HepG2 (cell line): ENCODE measurements at regions of chr1 and their contacts with region 1.

Region 1: GRCh38 chr1:26161415-26162219 is 2.7 kb downstream of the FAM110D start:
- DNase-seq: no peak
- ATAC-seq: peak; percentile 66
- H3K4me3 ChIP-seq: peak overlapping the region; percentile 42 to 76 (median 47); a peak in 5 of 6 replicates
- H3K27ac ChIP-seq: no peak overlapping the region
- H3K4me1 ChIP-seq: peaks cover 43% of the 10 kb centered on the region
- H3K27me3 ChIP-seq: peaks cover 12 to 68% of the 10 kb centered on the region in 2 experiments; a peak in 4 of 5 replicates
- CTCF ChIP-seq: peak; percentile 43; the same call in 1 of the 2 replicates
- EP300 ChIP-seq: no peak
- POLR2A ChIP-seq: no peak
- RAD21 ChIP-seq: 0 out of 2 replicates have a peak, but pooled peaks have one; percentile 34

Region 2: GRCh38 chr1:26102526-26102925 is 59.1 kb before region 1 on chr1:
- CTCF ChIA-PET with region 1: interaction called, 11 read pairs
- POLR2A ChIA-PET with region 1: no interaction called
- in situ Hi-C with region 1: loop called (anchors 10 kb)
- intact Hi-C with region 1: no loop called
- DNase-seq: no peak
- ATAC-seq: no peak
- H3K4me3 ChIP-seq: no peak overlapping the region
- H3K27ac ChIP-seq: no peak overlapping the region
- H3K4me1 ChIP-seq: peaks cover 8% of the 10 kb centered on the region; the same call in 1 of the 2 replicates
- H3K27me3 ChIP-seq: peaks cover 0 to 18% of the 10 kb centered on the region in 2 experiments; a peak in 1 of 5 replicates
- CTCF ChIP-seq: no peak
- EP300 ChIP-seq: no peak
- POLR2A ChIP-seq: no peak
- RAD21 ChIP-seq: no peak

Region 3: DNA sequence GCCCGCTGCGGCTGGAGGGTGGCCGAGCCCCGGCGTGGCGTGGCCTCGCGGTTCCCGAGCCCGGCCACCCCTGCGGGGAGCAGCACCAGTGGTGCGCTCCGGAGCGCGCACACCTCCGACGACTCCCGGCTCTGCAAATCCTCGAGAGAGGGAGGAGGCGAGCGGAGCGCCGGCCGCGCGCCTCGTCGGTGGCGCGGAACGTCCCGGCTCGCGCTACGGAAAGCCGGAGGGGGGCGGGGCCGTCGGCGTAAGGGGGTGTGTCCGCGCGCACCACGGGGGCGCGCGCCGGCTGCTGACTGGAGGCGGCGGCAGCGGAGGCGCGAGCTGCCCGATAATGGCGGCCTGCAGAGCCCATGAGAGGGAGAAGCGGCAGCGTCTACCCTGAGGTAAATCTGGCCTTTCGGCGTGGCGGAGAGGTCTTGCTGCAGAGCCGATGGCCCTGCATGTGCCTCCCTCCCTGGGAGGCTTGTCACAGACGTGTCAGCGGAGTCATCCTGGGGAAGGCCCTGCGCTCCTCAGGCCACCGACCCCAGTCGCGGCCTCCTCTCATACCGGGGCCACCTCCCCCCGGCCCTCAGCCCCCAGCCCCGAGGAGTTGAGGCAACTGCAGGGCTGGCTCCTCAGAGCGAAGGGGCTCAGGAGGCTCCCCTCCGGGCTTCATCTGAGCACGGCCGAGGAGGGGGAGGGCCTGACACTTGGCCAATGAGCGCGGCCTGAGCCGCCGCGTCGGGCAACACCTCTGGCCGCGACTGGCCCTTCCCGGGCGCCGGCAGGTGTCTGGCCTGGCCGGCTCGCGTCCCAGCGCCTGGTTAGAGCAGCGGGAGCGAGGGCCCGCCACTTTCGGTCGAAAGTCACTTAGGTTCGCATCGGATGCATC is 49.8 kb before region 1 on chr1 and contains the start of gene PDIK1L:
- CTCF ChIA-PET with region 1: no interaction called
- POLR2A ChIA-PET with region 1: no interaction called
- in situ Hi-C with region 1: loop called (anchors 10 kb)
- intact Hi-C with region 1: loop called (anchors 5 kb)
- DNase-seq: peak; percentile 84
- ATAC-seq: peak; percentile 93
- H3K4me3 ChIP-seq: peak within 1 kb of the TSS; percentile 73 to 98 (median 87)
- H3K27ac ChIP-seq: peak within 1 kb of the TSS; percentile 93
- H3K4me1 ChIP-seq: peaks cover 32% of the 10 kb centered on the region
- H3K27me3 ChIP-seq: no peaks in the 10 kb centered on the region; a peak in 1 of 5 replicates
- CTCF ChIP-seq: no peak
- EP300 ChIP-seq: no peak
- POLR2A ChIP-seq: peak; percentile 76
- RAD21 ChIP-seq: no peak; the same call in 1 of the 2 replicates
- total RNA-seq, gene PDIK1L: 4.6 and 5.8 TPM in 2 replicates